Endothelial cell of umbilical vein (primary cell): ENCODE measurements at regions of chr12 and their contacts with region 1.

Region 1: GRCh38 chr12:64890873-64891468 is 66.5 kb downstream of the TBC1D30 start:
- DNase-seq: peak; percentile 67
- H3K4me3 ChIP-seq: no peak overlapping the region
- H3K27ac ChIP-seq: no peak overlapping the region
- H3K4me1 ChIP-seq: peaks cover 36% of the 10 kb centered on the region
- H3K27me3 ChIP-seq: no peaks in the 10 kb centered on the region
- CTCF ChIP-seq: peak; percentile 35 to 53
- POLR2A ChIP-seq: no peak

Region 2: DNA sequence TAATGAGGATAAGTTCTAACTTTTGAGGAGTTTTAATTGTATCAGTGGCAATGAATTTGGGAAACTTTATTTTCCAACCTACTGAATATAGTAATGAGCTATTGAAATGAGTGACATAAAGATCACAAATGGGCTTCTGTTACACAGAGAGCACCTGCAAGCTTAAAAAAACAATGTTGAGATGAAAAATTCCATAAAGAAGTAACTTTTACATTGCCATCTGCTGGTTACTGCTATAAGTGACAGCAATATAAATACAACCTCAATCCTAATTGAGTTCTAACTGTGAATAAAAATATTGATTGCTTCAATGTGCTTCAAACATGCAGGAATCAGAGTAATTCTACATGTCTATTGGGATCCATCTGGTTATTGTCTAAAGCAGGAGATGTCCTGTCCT is 216.0 kb after region 1 on chr12:
- CTCF ChIA-PET with region 1: interaction called, 116 read pairs
- POLR2A ChIA-PET with region 1: no interaction called
- dilution Hi-C with region 1: no loop called
- intact Hi-C with region 1: loop called (anchors 1 kb)
- DNase-seq: peak; percentile 9
- H3K4me3 ChIP-seq: no peak overlapping the region
- H3K27ac ChIP-seq: no peak overlapping the region
- H3K4me1 ChIP-seq: no peaks in the 10 kb centered on the region
- H3K27me3 ChIP-seq: peaks cover 1 to 4% of the 10 kb centered on the region in 2 experiments
- CTCF ChIP-seq: peak in 1 of 2 donors; percentile 24
- POLR2A ChIP-seq: no peak

Region 3: DNA sequence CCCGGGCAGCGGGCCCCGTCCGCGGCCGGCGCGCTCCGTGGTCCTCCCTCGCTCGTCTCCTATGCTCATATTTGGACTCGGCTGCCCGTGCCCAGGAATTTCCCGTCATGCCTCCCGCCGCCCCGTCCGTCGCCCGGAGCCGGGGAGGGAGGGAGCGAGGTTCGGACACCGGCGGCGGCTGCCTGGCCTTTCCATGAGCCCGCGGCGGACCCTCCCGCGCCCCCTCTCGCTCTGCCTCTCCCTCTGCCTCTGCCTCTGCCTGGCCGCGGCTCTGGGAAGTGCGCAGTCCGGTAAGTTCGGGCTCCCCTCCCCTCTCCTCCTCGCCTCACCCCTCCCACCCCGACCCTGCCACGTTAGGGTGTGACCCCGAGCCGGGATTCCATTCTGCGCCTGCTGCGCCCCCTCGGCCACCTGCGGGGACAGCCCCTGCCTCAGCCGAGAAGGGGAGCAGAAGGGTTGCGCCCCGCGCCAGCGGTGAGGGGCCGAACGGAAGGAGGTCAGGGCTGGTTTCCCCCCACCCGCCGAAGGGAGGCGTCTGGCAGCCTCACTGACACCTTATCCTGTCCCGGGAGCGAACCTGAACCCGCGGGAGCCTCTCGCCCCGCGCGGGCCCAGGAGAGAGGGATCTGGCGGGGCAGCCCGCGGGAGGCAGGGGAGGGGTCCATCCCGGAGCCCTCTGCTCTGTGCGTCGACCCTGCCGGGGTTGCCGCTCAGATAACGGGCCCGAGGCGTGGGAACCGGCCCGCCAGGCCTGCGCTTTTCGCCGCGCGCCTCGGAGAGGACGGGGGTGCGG is 387.8 kb after region 1 on chr12 and contains the start of gene MSRB3:
- CTCF ChIA-PET with region 1: no interaction called
- POLR2A ChIA-PET with region 1: no interaction called
- dilution Hi-C with region 1: no loop called
- intact Hi-C with region 1: loop called (anchors 5 kb)
- DNase-seq: peak; percentile 66
- H3K4me3 ChIP-seq: peak within 1 kb of the TSS; percentile 63 to 95 (median 90)
- H3K27ac ChIP-seq: peak within 1 kb of the TSS; percentile 94
- H3K4me1 ChIP-seq: peaks cover 24% of the 10 kb centered on the region
- H3K27me3 ChIP-seq: no peaks in the 10 kb centered on the region
- CTCF ChIP-seq: no peak
- POLR2A ChIP-seq: no peak
- total RNA-seq, gene MSRB3: 59.3 and 63.7 TPM in 2 replicates

Region 4: GRCh38 chr12:65536876-65537661 is 646.1 kb after region 1 on chr12:
- CTCF ChIA-PET with region 1: no interaction called
- POLR2A ChIA-PET with region 1: no interaction called
- dilution Hi-C with region 1: no loop called
- intact Hi-C with region 1: loop called (anchors 10 kb)
- DNase-seq: peak; percentile 94
- H3K4me3 ChIP-seq: no peak overlapping the region
- H3K27ac ChIP-seq: peak overlapping the region; percentile 98
- H3K4me1 ChIP-seq: peaks cover 58% of the 10 kb centered on the region
- H3K27me3 ChIP-seq: no peaks in the 10 kb centered on the region
- CTCF ChIP-seq: no peak
- POLR2A ChIP-seq: peak; percentile 45

Region 5: GRCh38 chr12:66107451-66107915 is 1216.5 kb after region 1 on chr12:
- CTCF ChIA-PET with region 1: interaction called, 5 read pairs
- POLR2A ChIA-PET with region 1: no interaction called
- dilution Hi-C with region 1: no loop called
- intact Hi-C with region 1: loop called (anchors 1 kb)
- DNase-seq: peak; percentile 89
- H3K4me3 ChIP-seq: no peak overlapping the region
- H3K27ac ChIP-seq: no peak overlapping the region
- H3K4me1 ChIP-seq: peaks cover 2% of the 10 kb centered on the region
- H3K27me3 ChIP-seq: peaks cover 9 to 17% of the 10 kb centered on the region in 2 experiments
- CTCF ChIP-seq: peak; percentile 56 to 70
- POLR2A ChIP-seq: no peak